ENCODE measurements at regions of chr9 and their contacts with region 1.

Region 1: DNA sequence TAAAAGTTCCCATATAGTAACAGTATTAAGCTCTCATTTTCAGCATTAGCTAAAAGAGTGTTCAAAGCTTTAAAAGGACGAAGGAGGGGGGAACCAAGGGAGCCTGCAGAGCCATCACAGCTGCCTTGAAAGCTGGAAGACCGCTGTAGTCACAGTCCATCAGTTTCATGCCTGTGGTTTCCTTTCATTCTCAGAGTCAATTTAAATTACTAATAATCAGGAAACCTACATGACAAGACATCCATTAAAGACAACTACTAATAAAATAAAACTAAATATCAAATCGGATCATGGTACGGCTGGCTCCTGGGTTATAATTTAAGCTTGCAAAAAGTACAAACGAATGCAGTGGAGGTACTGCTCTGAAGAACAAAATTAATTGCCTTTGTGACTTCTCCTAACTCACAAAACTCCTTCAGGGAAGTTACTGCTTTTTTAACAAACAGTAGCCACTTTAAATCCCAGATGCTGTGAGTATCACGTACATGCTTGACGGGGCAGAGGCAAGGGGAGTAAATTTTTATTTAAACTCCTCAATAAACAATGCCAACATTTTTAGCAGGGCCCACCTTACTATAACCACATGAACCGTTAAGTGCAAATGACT is 213.5 kb downstream of the DENND1A start:
- DNase-seq: peak; percentile 43
- ATAC-seq: peak; percentile 89
- H3K4me3 ChIP-seq: no peak overlapping the region
- H3K27ac ChIP-seq: no peak overlapping the region
- H3K4me1 ChIP-seq: peaks cover 22% of the 10 kb centered on the region
- H3K27me3 ChIP-seq: no peaks in the 10 kb centered on the region
- CTCF ChIP-seq: no peak
- EP300 ChIP-seq: no peak
- POLR2A ChIP-seq: no peak
- RAD21 ChIP-seq: no peak

Region 2: DNA sequence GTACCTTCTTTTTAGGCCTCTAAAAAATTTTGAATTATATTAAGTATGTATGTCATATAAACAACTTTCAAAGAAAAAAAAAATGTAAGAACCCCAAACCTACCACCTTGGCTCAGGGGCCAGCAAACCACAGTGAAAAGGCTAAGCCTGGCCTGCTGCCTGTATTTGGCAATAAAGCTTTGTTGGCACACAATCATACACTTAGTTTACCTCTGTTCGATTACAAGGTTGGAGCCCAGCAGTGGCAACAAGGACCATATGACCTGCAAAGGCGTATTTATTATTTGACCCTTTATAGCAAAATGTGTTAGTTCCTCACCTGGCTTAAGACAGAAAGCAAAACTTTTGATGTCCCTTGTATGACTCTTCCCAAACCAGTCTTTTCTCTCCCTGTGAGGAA is 69.3 kb before region 1 on chr9:
- CTCF ChIA-PET with region 1: no interaction called
- POLR2A ChIA-PET with region 1: no interaction called
- RAD21 ChIA-PET with region 1: no interaction called
- SMC1A ChIA-PET with region 1: no interaction called
- in situ Hi-C with region 1: no loop called
- intact Hi-C with region 1: no loop called
- DNase-seq: no peak
- ATAC-seq: no peak
- H3K4me3 ChIP-seq: no peak overlapping the region
- H3K27ac ChIP-seq: no peak overlapping the region
- H3K4me1 ChIP-seq: no peaks in the 10 kb centered on the region
- H3K27me3 ChIP-seq: no peaks in the 10 kb centered on the region
- CTCF ChIP-seq: no peak
- EP300 ChIP-seq: no peak
- POLR2A ChIP-seq: no peak
- RAD21 ChIP-seq: no peak

Region 3: DNA sequence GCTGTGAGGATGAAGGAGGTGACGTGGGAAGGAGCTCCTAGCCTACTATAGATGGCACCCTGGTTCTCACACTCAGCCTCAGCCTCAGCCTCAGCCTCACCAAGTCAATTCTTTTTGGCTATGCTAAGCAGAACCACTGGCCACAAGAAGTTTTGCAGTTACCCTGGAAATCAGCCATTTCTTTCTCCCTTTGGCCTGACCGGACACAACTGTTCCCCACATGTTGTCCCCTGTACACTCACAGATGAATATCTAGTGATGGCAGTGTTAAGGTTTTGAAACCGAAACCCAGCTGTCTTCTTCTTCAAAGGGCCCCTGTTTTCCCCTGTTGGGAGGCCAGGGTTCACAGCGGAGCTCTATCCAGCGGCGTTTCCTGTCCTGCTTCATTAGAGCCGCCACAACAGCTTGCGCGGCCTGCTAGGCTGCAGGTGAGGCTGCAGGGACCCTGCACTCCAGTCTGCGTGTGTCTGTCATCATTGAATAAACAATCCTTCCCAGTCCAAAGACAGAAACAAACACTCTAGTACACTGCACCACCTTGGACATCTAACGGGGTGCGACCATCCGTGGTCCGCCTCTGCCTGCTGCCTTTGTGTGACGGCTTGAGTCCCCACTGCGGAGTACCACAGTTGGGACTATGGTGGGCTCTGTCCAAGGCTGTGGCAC is 37.0 kb before region 1 on chr9:
- CTCF ChIA-PET with region 1: no interaction called
- POLR2A ChIA-PET with region 1: interaction called, 4 read pairs
- RAD21 ChIA-PET with region 1: interaction called, 14 read pairs
- SMC1A ChIA-PET with region 1: interaction called, 29 read pairs
- in situ Hi-C with region 1: no loop called
- intact Hi-C with region 1: no loop called
- DNase-seq: peak; percentile 95
- ATAC-seq: peak; percentile 97
- H3K4me3 ChIP-seq: no peak overlapping the region
- H3K27ac ChIP-seq: peak overlapping the region; percentile 72
- H3K4me1 ChIP-seq: peaks cover 31% of the 10 kb centered on the region
- H3K27me3 ChIP-seq: no peaks in the 10 kb centered on the region
- CTCF ChIP-seq: no peak
- EP300 ChIP-seq: peak in 1 of 2 experiments; percentile 82; a peak in 3 of 4 replicates
- POLR2A ChIP-seq: peak; percentile 60; the same call in 1 of the 2 replicates
- RAD21 ChIP-seq: peak; percentile 21; the same call in 1 of the 2 replicates

Region 4: DNA sequence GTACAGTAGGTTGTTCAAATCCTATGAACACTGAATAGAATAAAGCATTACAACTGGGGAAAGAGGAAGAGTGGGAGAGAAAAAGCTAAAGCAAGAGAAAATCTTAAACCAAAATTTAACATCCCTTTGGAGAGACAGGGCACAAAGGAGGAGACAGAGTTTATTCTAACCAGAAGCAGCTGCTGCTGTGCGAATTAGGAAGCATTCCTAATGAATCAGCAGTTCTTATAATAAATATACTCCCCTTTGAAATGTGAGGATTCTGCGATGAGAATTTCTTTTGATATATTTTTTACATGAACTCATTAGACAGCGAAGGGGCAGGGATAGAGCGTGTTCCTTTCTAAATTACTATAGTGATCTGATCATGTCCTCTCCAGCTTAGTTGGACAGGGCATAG is 20.0 kb before region 1 on chr9:
- CTCF ChIA-PET with region 1: interaction called, 5 read pairs
- POLR2A ChIA-PET with region 1: interaction called, 3 read pairs
- RAD21 ChIA-PET with region 1: interaction called, 16 read pairs
- SMC1A ChIA-PET with region 1: interaction called, 37 read pairs
- in situ Hi-C with region 1: no loop called
- intact Hi-C with region 1: no loop called
- DNase-seq: no peak
- ATAC-seq: no peak
- H3K4me3 ChIP-seq: no peak overlapping the region
- H3K27ac ChIP-seq: no peak overlapping the region
- H3K4me1 ChIP-seq: peaks cover 12% of the 10 kb centered on the region; the same call in 1 of the 2 replicates
- H3K27me3 ChIP-seq: no peaks in the 10 kb centered on the region
- CTCF ChIP-seq: no peak
- EP300 ChIP-seq: no peak
- POLR2A ChIP-seq: no peak
- RAD21 ChIP-seq: no peak

Region 5: DNA sequence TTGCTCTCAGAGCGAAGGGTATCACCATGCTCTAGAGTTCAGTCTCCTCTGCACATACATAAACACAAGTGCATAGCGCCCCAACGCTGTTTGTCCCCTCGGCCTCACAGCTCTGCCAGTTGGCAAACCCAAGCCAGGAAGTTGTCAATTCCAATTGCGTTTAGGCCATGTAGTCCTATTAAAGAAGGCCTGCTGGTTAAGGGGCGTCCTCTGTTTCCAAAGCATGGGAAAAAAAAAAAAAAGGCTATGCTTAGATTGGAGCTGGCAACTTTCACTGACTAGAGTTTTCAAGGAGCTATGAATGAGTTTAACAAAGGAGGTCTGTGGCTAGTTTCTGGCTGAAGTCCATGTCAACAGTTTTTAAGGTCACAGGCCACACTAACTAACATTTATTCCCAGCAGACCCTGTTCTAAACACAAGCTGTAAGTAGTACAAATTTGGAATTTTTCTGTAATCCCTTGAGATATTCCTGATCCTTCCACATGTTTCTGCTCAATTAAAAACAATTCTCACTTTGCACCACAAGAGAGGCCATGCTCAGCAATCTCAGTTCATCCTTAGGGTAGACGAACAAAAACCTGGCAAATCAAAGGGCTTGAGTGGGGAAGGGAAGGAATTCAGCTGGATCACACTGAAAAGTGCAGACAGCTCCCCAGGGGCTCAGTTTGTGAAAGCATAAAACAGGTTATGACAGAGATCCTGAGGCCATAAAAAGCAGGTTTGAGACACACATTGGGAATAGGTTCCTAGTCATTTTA is 25.7 kb after region 1 on chr9:
- CTCF ChIA-PET with region 1: interaction called, 4 read pairs
- POLR2A ChIA-PET with region 1: interaction called, 3 read pairs
- RAD21 ChIA-PET with region 1: no interaction called
- SMC1A ChIA-PET with region 1: interaction called, 36 read pairs
- in situ Hi-C with region 1: no loop called
- intact Hi-C with region 1: no loop called
- DNase-seq: no peak
- ATAC-seq: no peak
- H3K4me3 ChIP-seq: no peak overlapping the region
- H3K27ac ChIP-seq: no peak overlapping the region
- H3K4me1 ChIP-seq: peaks cover 4% of the 10 kb centered on the region; the same call in 1 of the 2 replicates
- H3K27me3 ChIP-seq: no peaks in the 10 kb centered on the region
- CTCF ChIP-seq: no peak
- EP300 ChIP-seq: no peak
- POLR2A ChIP-seq: no peak
- RAD21 ChIP-seq: no peak

Region 6: DNA sequence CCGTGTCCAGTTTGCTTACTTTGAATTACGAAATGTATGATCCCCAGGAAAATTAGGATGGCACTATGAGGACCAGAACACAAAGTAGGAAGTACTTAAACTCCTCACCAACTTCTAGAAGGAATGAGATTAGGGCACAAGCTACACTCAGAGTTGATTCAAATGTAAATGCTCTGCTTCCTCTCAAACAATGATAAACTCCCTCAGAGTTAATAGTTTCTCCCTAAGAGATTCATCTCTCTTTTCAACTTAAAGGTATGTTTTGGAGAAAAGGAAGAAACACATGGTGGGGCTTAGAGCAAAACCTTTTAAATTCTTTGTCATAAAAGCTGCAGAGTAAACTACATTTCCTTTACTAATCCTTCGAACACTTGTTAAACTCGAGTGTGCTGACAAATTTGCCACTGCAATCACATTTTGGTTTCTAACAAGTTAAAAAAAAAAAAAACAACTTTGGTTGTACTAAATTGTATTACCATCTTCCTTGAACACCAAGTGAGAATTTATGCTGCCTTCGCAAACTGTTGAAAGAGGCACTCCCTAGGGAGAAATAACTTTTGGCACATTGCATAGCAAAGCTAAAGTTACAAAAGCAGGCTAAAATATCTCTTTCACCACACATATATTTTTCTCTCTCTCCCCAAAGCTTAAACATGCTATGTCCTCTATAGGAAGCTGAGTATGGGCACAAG is 146.9 kb after region 1 on chr9:
- CTCF ChIA-PET with region 1: no interaction called
- POLR2A ChIA-PET with region 1: no interaction called
- RAD21 ChIA-PET with region 1: no interaction called
- SMC1A ChIA-PET with region 1: no interaction called
- in situ Hi-C with region 1: no loop called
- intact Hi-C with region 1: no loop called
- DNase-seq: no peak
- ATAC-seq: no peak
- H3K4me3 ChIP-seq: no peak overlapping the region
- H3K27ac ChIP-seq: no peak overlapping the region
- H3K4me1 ChIP-seq: peaks cover 20% of the 10 kb centered on the region
- H3K27me3 ChIP-seq: no peaks in the 10 kb centered on the region
- CTCF ChIP-seq: no peak
- EP300 ChIP-seq: no peak
- POLR2A ChIP-seq: no peak
- RAD21 ChIP-seq: no peak

Region 7: GRCh38 chr9:123940721-123941523 is 224.5 kb after region 1 on chr9:
- CTCF ChIA-PET with region 1: no interaction called
- POLR2A ChIA-PET with region 1: interaction called, 3 read pairs
- RAD21 ChIA-PET with region 1: no interaction called
- SMC1A ChIA-PET with region 1: interaction called, 10 read pairs
- in situ Hi-C with region 1: no loop called
- intact Hi-C with region 1: no loop called
- DNase-seq: peak; percentile 77
- ATAC-seq: peak; percentile 95
- H3K4me3 ChIP-seq: no peak overlapping the region
- H3K27ac ChIP-seq: no peak overlapping the region
- H3K4me1 ChIP-seq: no peaks in the 10 kb centered on the region
- H3K27me3 ChIP-seq: no peaks in the 10 kb centered on the region
- CTCF ChIP-seq: no peak
- EP300 ChIP-seq: peak; percentile 64 to 82; a peak in 2 of 4 replicates
- POLR2A ChIP-seq: no peak
- RAD21 ChIP-seq: no peak

Measured in GM12878 (cell line).